Panc1 (cell line): ENCODE measurements at regions of chr7 and their contacts with region 1.

Region 1: DNA sequence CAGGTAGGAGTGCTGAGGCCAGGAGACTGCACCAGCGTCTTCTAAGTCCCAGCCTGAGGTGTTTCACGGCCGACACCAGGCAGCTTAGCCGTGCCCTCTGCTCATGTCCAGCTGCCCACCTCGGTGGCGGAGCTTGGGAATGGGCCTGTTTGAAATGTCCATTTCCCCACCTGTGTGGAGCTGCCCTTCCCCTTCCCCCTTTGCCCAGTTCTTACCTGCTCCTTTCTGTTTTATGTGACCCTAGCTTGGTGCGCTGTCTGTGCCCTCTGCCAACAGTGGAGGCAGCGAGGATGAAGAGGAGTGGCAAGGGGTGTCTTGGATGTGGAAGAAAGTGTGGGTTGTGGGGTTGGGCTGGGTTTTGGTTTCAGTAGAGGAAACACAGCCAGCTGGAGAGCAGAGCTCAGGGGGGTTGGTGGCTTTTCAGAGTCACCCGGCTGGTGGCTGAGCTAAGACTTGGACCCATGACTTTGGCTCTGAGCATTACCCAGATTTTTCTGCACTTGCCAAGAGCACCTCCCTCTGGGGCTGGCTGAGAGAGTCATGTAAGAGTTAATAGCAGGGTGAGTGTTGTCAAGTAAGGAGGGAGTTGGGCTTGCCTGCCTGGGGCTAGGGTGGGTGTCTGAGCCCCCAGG is 37.4 kb downstream of the GBX1 start:
- DNase-seq: no peak
- ATAC-seq: no peak
- H3K4me3 ChIP-seq: no peak overlapping the region
- H3K27ac ChIP-seq: no peak overlapping the region
- H3K4me1 ChIP-seq: no peaks in the 10 kb centered on the region
- H3K27me3 ChIP-seq: no peaks in the 10 kb centered on the region
- CTCF ChIP-seq: no peak

Region 2: GRCh38 chr7:150769768-150770167 is 360.3 kb before region 1 on chr7:
- CTCF ChIA-PET with region 1: no interaction called
- POLR2A ChIA-PET with region 1: interaction called, 10 read pairs
- in situ Hi-C with region 1: no loop called
- intact Hi-C with region 1: no loop called
- DNase-seq: no peak
- ATAC-seq: no peak
- H3K4me3 ChIP-seq: no peak overlapping the region
- H3K27ac ChIP-seq: no peak overlapping the region
- H3K4me1 ChIP-seq: no peaks in the 10 kb centered on the region
- H3K27me3 ChIP-seq: no peaks in the 10 kb centered on the region
- CTCF ChIP-seq: no peak

Region 3: GRCh38 chr7:151198945-151199848 is 69.1 kb after region 1 on chr7:
- CTCF ChIA-PET with region 1: interaction called, 20 read pairs
- POLR2A ChIA-PET with region 1: no interaction called
- in situ Hi-C with region 1: no loop called
- intact Hi-C with region 1: no loop called
- DNase-seq: no peak
- ATAC-seq: no peak
- H3K4me3 ChIP-seq: no peak overlapping the region
- H3K27ac ChIP-seq: no peak overlapping the region
- H3K4me1 ChIP-seq: no peaks in the 10 kb centered on the region
- H3K27me3 ChIP-seq: peaks cover 7% of the 10 kb centered on the region
- CTCF ChIP-seq: no peak